Calu3 (cell line): ENCODE measurements at regions of chr2 and their contacts with region 1.

Region 1: DNA sequence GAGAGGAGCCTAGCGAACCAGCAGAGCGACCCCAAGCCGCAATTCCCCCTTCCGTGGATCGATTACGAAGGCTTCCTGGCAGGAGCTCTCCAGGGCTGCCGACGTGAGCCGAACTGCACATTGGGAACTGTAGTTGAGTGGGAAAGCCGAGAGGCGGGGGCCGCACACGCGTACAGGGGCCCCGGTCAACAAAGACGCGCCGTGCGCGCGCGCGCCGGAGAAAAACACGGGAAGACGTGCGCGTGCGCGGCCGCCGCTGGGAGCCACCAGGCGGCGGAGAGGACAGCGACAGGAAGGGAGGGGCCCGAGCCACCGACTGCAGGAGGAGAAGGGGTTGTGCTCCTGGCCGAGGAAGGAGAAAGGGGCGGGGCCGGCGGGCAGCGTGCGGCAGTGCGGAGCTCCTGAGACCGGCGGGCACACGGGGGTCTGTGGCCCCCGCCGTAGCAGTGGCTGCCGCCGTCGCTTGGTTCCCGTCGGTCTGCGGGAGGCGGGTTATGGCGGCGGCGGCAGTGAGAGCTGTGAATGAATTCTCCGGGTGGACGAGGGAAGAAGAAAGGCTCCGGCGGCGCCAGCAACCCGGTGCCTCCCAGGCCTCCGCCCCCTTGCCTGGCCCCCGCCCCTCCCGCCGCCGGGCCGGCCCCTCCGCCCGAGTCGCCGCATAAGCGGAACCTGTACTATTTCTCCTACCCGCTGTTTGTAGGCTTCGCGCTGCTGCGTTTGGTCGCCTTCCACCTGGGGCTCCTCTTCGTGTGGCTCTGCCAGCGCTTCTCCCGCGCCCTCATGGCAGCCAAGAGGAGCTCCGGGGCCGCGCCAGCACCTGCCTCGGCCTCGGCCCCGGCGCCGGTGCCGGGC is at the start of gene SPAST:
- DNase-seq: peak; percentile 98
- H3K4me3 Mint-ChIP-seq: peak within 1 kb of the TSS; percentile 84
- H3K27ac Mint-ChIP-seq: peak within 1 kb of the TSS; percentile 78
- H3K4me1 Mint-ChIP-seq: peaks cover 25% of the 10 kb centered on the region
- H3K27me3 Mint-ChIP-seq: no peaks in the 10 kb centered on the region
- CTCF ChIP-seq: peak; percentile 54
- total RNA-seq, gene SPAST: 18.5 and 18.8 TPM in 2 replicates

Region 2: DNA sequence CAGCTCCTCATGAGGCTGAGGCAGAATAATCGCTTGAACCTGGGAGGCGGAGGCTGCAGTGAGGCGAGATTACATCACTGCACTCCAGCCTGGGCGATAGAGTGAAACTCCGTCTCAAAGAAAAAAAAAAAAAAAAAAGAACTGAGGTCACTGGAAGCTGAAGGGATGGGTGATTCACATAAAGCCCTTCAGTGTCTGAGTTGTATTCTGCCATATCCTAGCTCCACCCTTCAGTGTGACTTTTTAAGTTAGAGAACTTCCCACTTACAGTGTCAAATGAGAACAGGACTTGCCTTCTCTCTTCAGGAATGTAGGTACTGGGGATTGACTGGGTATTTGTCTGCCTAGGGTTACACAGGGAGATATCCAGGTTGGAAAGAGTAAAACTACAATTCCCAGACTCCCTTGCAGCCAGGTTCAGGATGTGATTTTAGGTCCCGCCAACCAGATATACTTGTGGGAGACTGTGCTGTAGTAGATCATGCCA is 791.7 kb before region 1 on chr2:
- CTCF ChIA-PET with region 1: no interaction called
- intact Hi-C with region 1: no loop called
- DNase-seq: no peak
- H3K4me3 Mint-ChIP-seq: no peak overlapping the region
- H3K27ac Mint-ChIP-seq: no peak overlapping the region
- H3K4me1 Mint-ChIP-seq: no peaks in the 10 kb centered on the region
- H3K27me3 Mint-ChIP-seq: peaks cover 80% of the 10 kb centered on the region
- CTCF ChIP-seq: no peak

Region 3: DNA sequence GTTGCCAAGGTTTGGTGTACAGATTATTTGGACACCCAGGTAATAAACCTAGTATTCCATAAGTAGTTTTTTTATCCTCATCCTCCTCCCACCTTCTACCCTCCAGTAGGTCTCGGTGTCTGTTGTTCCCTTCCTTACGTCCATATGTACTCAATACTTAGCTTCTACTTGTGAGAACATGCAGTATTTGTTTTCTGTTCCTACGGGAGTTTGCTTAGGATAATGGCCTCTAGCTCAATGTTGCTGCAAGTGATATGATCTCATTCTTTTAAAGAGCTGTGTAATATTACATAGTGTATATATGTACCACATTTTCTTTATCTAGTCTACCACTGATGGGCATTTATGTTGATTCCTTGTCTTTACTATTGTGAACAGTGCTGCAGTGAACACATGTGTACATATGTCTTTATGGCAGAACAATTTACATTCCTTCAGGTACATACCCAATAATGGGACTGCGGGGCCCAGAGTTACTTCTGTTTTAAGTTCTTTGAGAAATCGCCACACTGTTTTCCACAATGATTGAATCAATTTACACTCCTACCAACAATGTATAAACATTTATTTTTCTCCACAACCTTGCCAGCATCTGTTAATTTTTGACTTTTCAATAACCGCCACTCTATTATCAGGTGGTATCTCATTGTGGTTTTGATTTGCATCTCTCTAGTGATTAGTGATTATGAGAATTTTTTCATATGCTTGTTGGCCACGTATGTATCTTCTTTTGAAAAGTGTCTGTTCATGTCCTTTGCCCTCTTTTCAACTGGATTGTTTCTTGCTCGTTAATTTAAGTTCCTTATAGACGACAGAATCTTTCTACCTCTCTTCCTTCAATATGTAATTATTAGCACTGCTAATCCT is 140.8 kb before region 1 on chr2:
- CTCF ChIA-PET with region 1: no interaction called
- intact Hi-C with region 1: no loop called
- DNase-seq: no peak
- H3K4me3 Mint-ChIP-seq: no peak overlapping the region
- H3K27ac Mint-ChIP-seq: no peak overlapping the region
- H3K4me1 Mint-ChIP-seq: no peaks in the 10 kb centered on the region
- H3K27me3 Mint-ChIP-seq: no peaks in the 10 kb centered on the region
- CTCF ChIP-seq: no peak

Region 4: GRCh38 chr2:32009516-32010256 is 53.9 kb before region 1 on chr2:
- CTCF ChIA-PET with region 1: interaction called, 3 read pairs
- intact Hi-C with region 1: loop called (anchors 5 kb)
- DNase-seq: peak; percentile 35
- H3K4me3 Mint-ChIP-seq: peak overlapping the region; percentile 87
- H3K27ac Mint-ChIP-seq: peak overlapping the region; percentile 72
- H3K4me1 Mint-ChIP-seq: peaks cover 32% of the 10 kb centered on the region
- H3K27me3 Mint-ChIP-seq: no peaks in the 10 kb centered on the region
- CTCF ChIP-seq: no peak

Region 5: GRCh38 chr2:32039447-32040219 is 23.9 kb before region 1 on chr2 and contains the start of gene DPY30:
- CTCF ChIA-PET with region 1: interaction called, 21 read pairs
- intact Hi-C with region 1: loop called (anchors 2 kb)
- DNase-seq: peak; percentile 90
- H3K4me3 Mint-ChIP-seq: peak within 1 kb of the TSS; percentile 93
- H3K27ac Mint-ChIP-seq: peak within 1 kb of the TSS; percentile 93
- H3K4me1 Mint-ChIP-seq: no peaks in the 10 kb centered on the region
- H3K27me3 Mint-ChIP-seq: no peaks in the 10 kb centered on the region
- CTCF ChIP-seq: no peak
- total RNA-seq, gene DPY30: 106 and 117 TPM in 2 replicates

Region 6: DNA sequence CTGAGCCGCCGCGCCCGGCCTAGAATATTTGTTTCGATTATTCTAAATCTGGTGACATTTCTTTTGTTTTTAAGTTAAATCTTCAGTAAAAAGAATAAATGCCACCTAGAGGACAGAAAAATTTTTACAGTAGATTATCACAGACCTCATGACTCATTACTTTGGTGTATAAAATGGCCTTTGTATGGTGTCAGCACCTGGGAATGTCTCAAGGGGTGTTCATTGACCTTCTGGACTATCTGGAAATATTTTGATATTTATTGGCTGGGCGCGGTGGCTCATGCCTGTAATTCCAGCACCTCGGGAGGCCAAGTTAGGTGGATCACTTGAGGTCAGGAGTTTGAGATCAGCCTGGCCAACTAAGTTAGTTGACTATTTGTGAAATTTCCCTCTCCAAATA is 71.9 kb after region 1 on chr2:
- CTCF ChIA-PET with region 1: no interaction called
- intact Hi-C with region 1: loop called (anchors 2 kb)
- DNase-seq: peak; percentile 63
- H3K4me3 Mint-ChIP-seq: no peak overlapping the region
- H3K27ac Mint-ChIP-seq: peak overlapping the region; percentile 87
- H3K4me1 Mint-ChIP-seq: peaks cover 20% of the 10 kb centered on the region
- H3K27me3 Mint-ChIP-seq: no peaks in the 10 kb centered on the region
- CTCF ChIP-seq: peak; percentile 16

Region 7: DNA sequence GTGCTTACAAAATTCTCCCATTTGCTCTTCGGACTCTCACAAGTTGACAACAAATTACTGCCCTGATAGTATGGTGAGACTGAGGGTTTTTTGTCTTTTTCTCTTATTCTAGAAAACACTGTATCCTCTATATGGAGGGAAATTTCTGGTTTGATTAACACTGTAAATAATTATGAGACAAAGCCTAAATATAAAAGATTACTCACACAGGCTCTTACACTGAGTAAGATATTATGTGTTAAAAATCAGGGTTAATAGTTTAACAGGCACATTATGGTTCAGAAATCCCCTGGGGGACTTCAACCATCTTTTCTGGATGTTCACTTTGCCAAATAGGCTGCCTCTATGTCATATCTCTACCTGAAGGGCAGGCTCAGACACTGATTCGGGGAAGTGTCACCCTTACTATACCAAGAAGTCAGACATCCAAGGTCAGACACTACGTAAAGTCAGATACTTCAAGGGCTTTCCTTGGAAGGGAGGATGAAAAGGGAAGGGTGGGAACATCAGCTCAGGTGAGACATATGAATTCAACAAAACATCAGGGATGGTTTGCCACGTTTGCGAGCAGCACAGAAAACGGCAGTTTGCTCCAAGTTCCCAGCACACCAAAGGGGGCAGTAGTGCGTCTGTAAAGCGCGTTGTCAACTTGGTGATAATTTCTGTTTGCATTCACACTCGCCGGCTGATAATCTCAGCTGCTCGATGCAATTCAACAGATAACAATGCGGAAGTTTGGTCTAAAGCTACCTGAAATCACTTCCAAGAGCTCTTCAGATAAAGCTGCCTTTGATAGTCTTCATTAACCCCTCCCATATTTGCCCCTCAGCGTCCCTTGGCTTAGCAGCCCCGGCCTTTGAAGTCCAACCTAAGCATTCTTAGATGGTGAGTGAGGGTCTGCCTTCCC is 1411.9 kb after region 1 on chr2:
- CTCF ChIA-PET with region 1: no interaction called
- intact Hi-C with region 1: no loop called
- DNase-seq: peak; percentile 85
- H3K4me3 Mint-ChIP-seq: peak overlapping the region; percentile 93
- H3K27ac Mint-ChIP-seq: peak overlapping the region; percentile 71
- H3K4me1 Mint-ChIP-seq: peaks cover 21% of the 10 kb centered on the region
- H3K27me3 Mint-ChIP-seq: no peaks in the 10 kb centered on the region
- CTCF ChIP-seq: peak; percentile 72